ENCODE measurements at regions of chr6 and their contacts with region 1.

Region 1: GRCh38 chr6:161370880-161371279 is 97.0 kb upstream of the AGPAT4 start:
- DNase-seq: peak; percentile 79
- H3K4me3 ChIP-seq: no peak overlapping the region; a peak in 1 of 4 replicates
- H3K27ac ChIP-seq: no peak overlapping the region
- H3K4me1 ChIP-seq: peaks cover 0 to 10% of the 10 kb centered on the region in 2 experiments; a peak in 1 of 4 replicates
- H3K27me3 ChIP-seq: no peaks in the 10 kb centered on the region
- CTCF ChIP-seq: peak; percentile 95
- EP300 ChIP-seq: no peak
- RAD21 ChIP-seq: peak; percentile 95

Region 2: DNA sequence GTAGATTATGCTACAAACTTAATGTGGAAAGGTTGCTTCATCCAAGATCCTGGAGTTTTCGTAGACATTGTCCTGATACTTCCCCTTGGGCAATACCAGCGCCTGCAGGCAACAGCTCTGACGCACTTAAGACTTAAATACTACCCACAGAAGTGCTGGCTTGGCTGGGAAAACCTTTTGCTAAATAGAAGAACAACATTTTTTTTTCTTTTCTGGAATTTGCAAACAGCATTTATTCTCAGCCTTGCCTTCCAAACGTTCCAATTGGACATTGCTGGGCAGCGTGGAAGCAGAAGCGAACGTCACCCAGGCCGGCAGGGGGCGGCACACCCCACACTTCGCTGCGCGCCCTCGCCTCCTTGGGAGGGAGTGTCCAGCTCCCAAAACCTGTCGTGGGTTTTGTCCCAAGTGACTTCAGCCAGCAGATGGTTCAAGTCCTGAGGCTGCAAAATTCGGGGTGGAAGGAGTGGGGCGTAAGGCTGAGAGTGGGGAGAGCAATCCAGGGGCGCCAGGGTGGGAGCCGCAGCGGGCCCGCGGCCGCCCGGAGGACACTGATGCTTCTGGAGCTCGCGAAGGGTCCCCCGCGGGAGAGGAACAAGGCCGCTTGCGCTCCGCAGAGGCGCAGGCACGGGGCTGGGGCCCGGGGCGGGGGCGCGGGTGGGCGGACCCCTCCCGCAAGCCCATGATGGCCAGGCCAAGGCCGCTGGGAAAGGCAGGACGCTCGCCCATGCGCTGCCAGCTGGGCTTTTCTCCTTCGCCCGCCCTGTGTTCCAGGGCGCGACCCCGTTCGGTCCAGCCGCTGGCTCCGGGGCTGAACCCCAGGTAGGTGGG is 440.1 kb before region 1 on chr6:
- CTCF ChIA-PET with region 1: interaction called, 380 read pairs
- POLR2A ChIA-PET with region 1: no interaction called
- DNase-seq: peak; percentile 86
- H3K4me3 ChIP-seq: peak overlapping the region; percentile 51 to 70
- H3K27ac ChIP-seq: no peak overlapping the region
- H3K4me1 ChIP-seq: no peaks in the 10 kb centered on the region
- H3K27me3 ChIP-seq: no peaks in the 10 kb centered on the region; the same call in 1 of the 2 replicates
- CTCF ChIP-seq: peak; percentile 97
- EP300 ChIP-seq: no peak
- RAD21 ChIP-seq: peak; percentile 92

Region 3: GRCh38 chr6:160992061-160992979 is 378.6 kb before region 1 on chr6:
- CTCF ChIA-PET with region 1: interaction called, 20 read pairs
- POLR2A ChIA-PET with region 1: no interaction called
- DNase-seq: peak; percentile 70
- H3K4me3 ChIP-seq: peak overlapping the region; percentile 89 to 90
- H3K27ac ChIP-seq: peak overlapping the region; percentile 86 to 92
- H3K4me1 ChIP-seq: peaks cover 3 to 5% of the 10 kb centered on the region in 2 experiments; a peak in 3 of 4 replicates
- H3K27me3 ChIP-seq: no peaks in the 10 kb centered on the region
- CTCF ChIP-seq: peak; percentile 77
- EP300 ChIP-seq: no peak
- RAD21 ChIP-seq: peak; percentile 73

Region 4: GRCh38 chr6:161141173-161141572 is 229.7 kb before region 1 on chr6:
- CTCF ChIA-PET with region 1: interaction called, 11 read pairs
- POLR2A ChIA-PET with region 1: no interaction called
- DNase-seq: no peak
- H3K4me3 ChIP-seq: no peak overlapping the region
- H3K27ac ChIP-seq: no peak overlapping the region
- H3K4me1 ChIP-seq: no peaks in the 10 kb centered on the region
- H3K27me3 ChIP-seq: no peaks in the 10 kb centered on the region
- CTCF ChIP-seq: no peak
- EP300 ChIP-seq: no peak
- RAD21 ChIP-seq: no peak

Region 5: DNA sequence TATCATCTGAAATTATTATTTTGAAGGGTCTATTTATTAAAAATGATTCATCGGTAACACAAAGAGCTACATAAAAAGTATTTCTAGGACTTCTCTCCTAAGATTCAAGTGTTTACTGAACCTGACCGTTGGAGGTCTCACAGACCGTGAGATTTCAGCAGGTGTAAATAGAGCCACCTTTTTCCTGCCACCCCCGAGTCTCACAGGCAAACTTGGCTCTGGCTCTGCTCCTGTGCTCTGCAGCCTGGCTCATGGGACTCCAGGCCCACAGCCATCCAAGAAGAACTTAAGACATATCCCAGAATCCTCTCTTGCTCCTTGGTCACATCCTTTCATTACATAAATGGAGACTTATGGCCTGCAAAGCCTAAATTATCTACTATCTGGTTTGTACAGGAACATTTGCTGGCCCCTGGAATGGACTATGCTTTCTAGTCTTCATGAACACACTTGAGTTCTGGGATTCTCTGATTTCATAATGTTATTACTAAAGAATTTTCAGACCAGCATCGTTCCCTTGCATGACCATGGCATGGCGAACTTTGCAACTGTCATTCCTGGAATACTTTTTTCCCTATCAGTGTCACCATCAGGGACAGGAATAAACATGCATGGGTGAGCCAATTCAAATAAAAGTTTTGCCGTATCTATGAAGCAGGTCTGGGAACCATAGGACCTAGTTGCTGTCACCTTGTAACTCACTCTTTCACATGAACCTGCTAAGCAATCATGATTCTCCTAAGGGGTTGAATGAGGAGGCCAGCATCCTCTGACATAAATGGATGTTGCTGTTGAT is 29.0 kb before region 1 on chr6:
- CTCF ChIA-PET with region 1: interaction called, 12 read pairs
- POLR2A ChIA-PET with region 1: no interaction called
- DNase-seq: no peak
- H3K4me3 ChIP-seq: no peak overlapping the region
- H3K27ac ChIP-seq: no peak overlapping the region
- H3K4me1 ChIP-seq: no peaks in the 10 kb centered on the region
- H3K27me3 ChIP-seq: no peaks in the 10 kb centered on the region
- CTCF ChIP-seq: no peak
- EP300 ChIP-seq: no peak
- RAD21 ChIP-seq: no peak

Region 6: DNA sequence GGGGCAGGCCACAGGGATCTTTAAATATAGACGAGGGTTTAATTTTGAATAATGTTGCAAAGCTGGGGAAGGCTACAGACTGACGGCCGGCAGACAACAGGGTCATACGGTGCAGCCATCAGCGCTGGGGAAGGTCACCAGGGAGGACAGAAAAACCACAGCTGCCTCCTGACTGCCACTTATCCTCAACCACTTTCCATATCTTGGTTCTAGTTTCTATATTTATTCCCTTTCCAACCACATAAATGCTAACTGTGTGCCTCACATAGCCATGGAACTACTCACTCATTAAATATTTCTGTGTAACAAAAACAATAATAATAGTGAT is 11.3 kb before region 1 on chr6:
- CTCF ChIA-PET with region 1: interaction called, 28 read pairs
- POLR2A ChIA-PET with region 1: no interaction called
- DNase-seq: no peak
- H3K4me3 ChIP-seq: no peak overlapping the region
- H3K27ac ChIP-seq: no peak overlapping the region
- H3K4me1 ChIP-seq: peaks cover 0 to 4% of the 10 kb centered on the region in 2 experiments; a peak in 1 of 4 replicates
- H3K27me3 ChIP-seq: no peaks in the 10 kb centered on the region
- CTCF ChIP-seq: no peak
- EP300 ChIP-seq: no peak
- RAD21 ChIP-seq: no peak

Region 7: DNA sequence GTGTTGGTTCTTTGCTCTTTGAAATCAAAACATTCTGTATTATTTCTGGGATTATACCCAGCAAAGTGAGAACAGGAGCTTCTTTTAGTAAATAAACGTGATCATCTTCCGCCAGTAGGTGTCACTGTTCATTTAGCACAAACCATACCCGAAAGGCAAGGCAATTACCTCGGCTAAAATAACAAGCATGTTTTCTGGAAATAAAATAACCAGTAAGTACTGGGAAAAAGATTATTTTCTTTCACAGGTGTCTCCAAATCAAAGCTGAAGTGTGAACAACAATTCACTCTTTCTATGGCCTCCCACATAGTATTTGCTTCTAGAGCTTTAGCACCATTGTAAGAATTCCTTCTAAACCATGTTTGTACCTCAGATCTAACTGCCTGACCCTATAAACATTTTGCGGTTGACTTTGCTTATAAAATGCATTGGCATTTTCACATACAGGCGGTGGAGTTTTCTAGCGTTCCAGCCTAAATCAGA is 47.6 kb after region 1 on chr6:
- CTCF ChIA-PET with region 1: interaction called, 15 read pairs
- POLR2A ChIA-PET with region 1: no interaction called
- DNase-seq: peak; percentile 61
- H3K4me3 ChIP-seq: no peak overlapping the region
- H3K27ac ChIP-seq: peak overlapping the region in 1 of 2 experiments; percentile 70; a peak in 2 of 4 replicates
- H3K4me1 ChIP-seq: peaks cover 0 to 22% of the 10 kb centered on the region in 2 experiments; a peak in 2 of 4 replicates
- H3K27me3 ChIP-seq: no peaks in the 10 kb centered on the region
- CTCF ChIP-seq: peak; percentile 82
- EP300 ChIP-seq: no peak
- RAD21 ChIP-seq: peak; percentile 85